Tibial artery (tissue), 4 donors: ENCODE measurements at regions of chr17 and their contacts with region 1.

Region 1: GRCh38 chr17:48074315-48075081 is 26.3 kb downstream of the NFE2L1 start:
- DNase-seq: peak; percentile 79 to 91
- H3K4me3 ChIP-seq: no peak overlapping the region
- H3K27ac ChIP-seq: peak overlapping the region; percentile 1 to 30
- H3K4me1 ChIP-seq: peaks cover 0 to 5% (median 0%) of the 10 kb centered on the region in 4 donors
- H3K27me3 ChIP-seq: no peaks in the 10 kb centered on the region
- CTCF ChIP-seq: peak; percentile 83 to 94

Region 2: GRCh38 chr17:48037036-48037837 is 37.3 kb before region 1 on chr17 and contains the start of gene COPZ2:
- intact Hi-C with region 1: loop called (anchors 2 kb)
- DNase-seq: peak; percentile 72 to 87
- H3K4me3 ChIP-seq: peak within 1 kb of the TSS; percentile 60 to 79
- H3K27ac ChIP-seq: peak within 1 kb of the TSS; percentile 84 to 90
- H3K4me1 ChIP-seq: peaks cover 0 to 14% (median 6%) of the 10 kb centered on the region in 4 donors
- H3K27me3 ChIP-seq: no peaks in the 10 kb centered on the region
- CTCF ChIP-seq: peak; percentile 35 to 44

Region 3: DNA sequence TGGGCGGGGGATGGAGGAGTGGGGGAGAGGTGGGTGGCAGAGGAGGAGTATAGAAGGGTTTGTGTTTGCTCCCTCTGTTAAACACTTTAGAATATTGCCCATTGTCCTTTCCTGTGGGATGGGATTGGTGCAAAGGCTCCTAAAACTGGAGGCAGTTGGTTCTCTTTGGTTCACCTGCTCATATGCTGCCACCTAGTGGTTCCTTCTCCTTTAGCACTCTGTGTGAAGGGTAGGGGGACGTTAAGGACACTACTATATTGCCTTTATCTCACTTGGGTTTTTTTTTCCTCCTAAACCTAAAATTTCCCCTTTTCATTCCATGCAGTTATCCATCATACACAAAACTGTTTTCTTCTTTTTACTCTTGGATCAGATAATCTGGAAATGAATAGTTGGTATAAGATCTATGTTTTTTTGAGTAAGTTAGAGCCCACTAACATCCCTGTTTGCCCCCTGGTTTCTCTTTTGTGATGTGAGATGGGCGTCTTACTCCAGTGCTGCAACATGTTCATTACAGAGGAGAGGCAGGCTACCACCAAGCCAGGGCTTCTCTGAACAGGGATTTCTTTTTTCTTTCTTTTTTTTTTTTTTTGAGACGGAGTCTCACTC is 56.8 kb after region 1 on chr17:
- intact Hi-C with region 1: loop called (anchors 5 kb)
- DNase-seq: peak in 1 of 2 donors; percentile 58
- H3K4me3 ChIP-seq: no peak overlapping the region
- H3K27ac ChIP-seq: no peak overlapping the region
- H3K4me1 ChIP-seq: peaks cover 0 to 6% (median 0%) of the 10 kb centered on the region in 4 donors
- H3K27me3 ChIP-seq: no peaks in the 10 kb centered on the region
- CTCF ChIP-seq: peak; percentile 82 to 89